Activated B cell treated with CpG ODN at 0.5 μM for 24 hours (primary cell): ENCODE measurements at regions of chr1 and their contacts with region 1.

Region 1: DNA sequence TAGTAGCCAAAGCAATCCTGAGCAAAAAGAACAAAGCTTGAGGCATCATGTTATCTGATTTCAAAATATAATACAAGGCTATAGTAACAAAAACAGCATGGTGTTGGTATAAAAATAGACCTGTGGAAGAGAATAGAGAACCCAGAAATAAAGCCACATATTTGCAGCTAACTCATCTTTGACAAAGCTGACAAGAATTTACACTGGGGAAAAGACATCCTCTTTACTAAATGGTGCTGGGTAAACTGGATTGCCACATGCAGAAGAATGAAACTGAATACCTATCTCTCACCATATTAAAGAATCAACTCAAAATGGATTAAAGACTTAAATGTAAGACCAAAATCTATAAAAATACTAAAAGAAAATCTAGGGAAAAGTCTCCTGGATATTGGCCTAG is 59.5 kb upstream of the CD55 start:
- DNase-seq: no peak
- ATAC-seq: no peak
- H3K4me3 Mint-ChIP-seq: no peak overlapping the region
- H3K27ac Mint-ChIP-seq: no peak overlapping the region
- H3K4me1 Mint-ChIP-seq: peaks cover 18% of the 10 kb centered on the region
- H3K27me3 Mint-ChIP-seq: no peaks in the 10 kb centered on the region
- CTCF ChIP-seq: no peak

Region 2: GRCh38 chr1:206962272-206962671 is 299.7 kb before region 1 on chr1:
- CTCF ChIA-PET with region 1: no interaction called
- POLR2A ChIA-PET with region 1: no interaction called
- intact Hi-C with region 1: no loop called
- DNase-seq: no peak
- ATAC-seq: no peak
- H3K4me3 Mint-ChIP-seq: no peak overlapping the region
- H3K27ac Mint-ChIP-seq: no peak overlapping the region
- H3K4me1 Mint-ChIP-seq: peaks cover 15% of the 10 kb centered on the region
- H3K27me3 Mint-ChIP-seq: no peaks in the 10 kb centered on the region
- CTCF ChIP-seq: no peak

Region 3: GRCh38 chr1:207218512-207219362 is 43.2 kb before region 1 on chr1:
- CTCF ChIA-PET with region 1: no interaction called
- POLR2A ChIA-PET with region 1: no interaction called
- intact Hi-C with region 1: loop called (anchors 10 kb)
- DNase-seq: no peak
- ATAC-seq: no peak
- H3K4me3 Mint-ChIP-seq: peak overlapping the region; percentile 26
- H3K27ac Mint-ChIP-seq: peak overlapping the region; percentile 30
- H3K4me1 Mint-ChIP-seq: peaks cover 25% of the 10 kb centered on the region
- H3K27me3 Mint-ChIP-seq: no peaks in the 10 kb centered on the region
- CTCF ChIP-seq: no peak